AG04449 (cell line): ENCODE measurements at regions of chr11 and their contacts with region 1.

Region 1: GRCh38 chr11:94623120-94623735 is 56.1 kb downstream of the PIWIL4 start:
- DNase-seq: peak; percentile 10
- H3K4me3 ChIP-seq: no peak overlapping the region
- CTCF ChIP-seq: peak; percentile 73

Region 2: DNA sequence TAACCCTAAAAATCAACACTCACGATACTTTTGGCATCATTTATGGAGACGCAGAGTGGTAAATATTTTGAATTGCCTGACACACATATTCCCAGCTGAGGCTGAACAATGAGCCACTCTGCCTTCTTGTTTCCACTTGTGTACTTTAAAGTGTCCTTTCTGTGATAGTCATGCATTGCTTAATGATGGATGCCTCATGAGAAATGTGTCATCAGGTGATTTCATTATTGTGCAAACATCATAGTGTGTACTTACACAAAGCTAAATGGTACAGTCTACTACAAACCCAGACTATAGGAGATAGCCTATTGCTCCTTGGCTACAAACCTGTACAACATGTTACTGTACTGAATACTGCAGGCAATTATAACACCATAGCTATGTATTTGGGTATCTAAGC is 173.8 kb before region 1 on chr11:
- CTCF ChIA-PET with region 1: no interaction called
- POLR2A ChIA-PET with region 1: no interaction called
- DNase-seq: no peak
- H3K4me3 ChIP-seq: no peak overlapping the region
- CTCF ChIP-seq: no peak

Region 3: GRCh38 chr11:94602430-94603372 is 20.5 kb before region 1 on chr11:
- CTCF ChIA-PET with region 1: interaction called, 19 read pairs
- POLR2A ChIA-PET with region 1: no interaction called
- DNase-seq: peak; percentile 45
- H3K4me3 ChIP-seq: no peak overlapping the region
- CTCF ChIP-seq: peak; percentile 58

Region 4: DNA sequence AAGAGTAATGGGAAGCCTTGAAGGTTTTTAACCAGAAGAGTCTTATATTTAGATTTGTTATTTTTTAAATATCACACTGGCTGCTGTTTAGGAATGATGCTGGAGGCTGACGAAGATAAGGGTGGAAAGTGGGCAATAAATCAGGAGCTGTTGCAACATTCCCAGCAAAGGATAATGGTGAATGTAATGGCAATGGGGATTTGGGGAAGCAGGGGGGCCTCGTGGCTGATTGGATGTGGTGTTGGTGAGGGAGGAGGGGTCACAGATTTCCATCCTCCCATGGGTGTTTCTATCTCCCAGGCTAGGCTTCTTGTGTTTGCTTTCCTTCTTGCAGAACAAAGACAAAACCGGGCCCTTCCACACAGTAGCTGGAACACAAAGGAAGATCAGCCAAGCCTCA is 24.7 kb after region 1 on chr11:
- CTCF ChIA-PET with region 1: interaction called, 11 read pairs
- POLR2A ChIA-PET with region 1: no interaction called
- DNase-seq: no peak
- H3K4me3 ChIP-seq: no peak overlapping the region
- CTCF ChIP-seq: no peak

Region 5: GRCh38 chr11:94767761-94768601 is 144.8 kb after region 1 on chr11 and contains the start of gene AMOTL1:
- CTCF ChIA-PET with region 1: interaction called, 14 read pairs
- POLR2A ChIA-PET with region 1: no interaction called
- DNase-seq: no peak
- H3K4me3 ChIP-seq: peak within 1 kb of the TSS; percentile 85
- CTCF ChIP-seq: no peak

Region 6: DNA sequence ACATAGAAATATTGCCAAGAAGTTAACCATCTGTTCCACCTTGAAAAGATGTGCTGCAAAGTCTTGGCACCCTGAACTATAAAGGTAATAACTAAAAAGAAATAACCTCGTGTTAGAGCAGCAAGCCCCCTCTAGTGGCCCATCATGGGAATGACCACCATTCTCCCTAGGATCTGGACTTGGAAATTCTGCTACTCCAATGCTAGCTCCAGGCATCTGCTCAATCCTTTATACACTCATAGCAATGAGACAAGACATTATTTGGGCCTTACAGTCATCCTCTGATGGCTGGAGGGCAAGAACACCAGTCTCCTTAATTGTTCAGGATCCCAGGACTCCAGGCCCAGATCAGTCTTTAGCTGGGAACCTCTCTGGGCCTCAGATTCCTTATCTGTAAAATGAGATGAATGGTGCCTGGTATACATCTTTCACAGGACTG is 274.1 kb after region 1 on chr11:
- CTCF ChIA-PET with region 1: interaction called, 118 read pairs
- POLR2A ChIA-PET with region 1: no interaction called
- DNase-seq: no peak
- H3K4me3 ChIP-seq: no peak overlapping the region
- CTCF ChIP-seq: peak; percentile 76

Region 7: GRCh38 chr11:94968334-94968958 is 345.2 kb after region 1 on chr11:
- CTCF ChIA-PET with region 1: interaction called, 171 read pairs
- POLR2A ChIA-PET with region 1: no interaction called
- DNase-seq: no peak
- H3K4me3 ChIP-seq: no peak overlapping the region
- CTCF ChIP-seq: peak; percentile 42